ENCODE measurements at regions of chr20 and their contacts with region 1.

Region 1: DNA sequence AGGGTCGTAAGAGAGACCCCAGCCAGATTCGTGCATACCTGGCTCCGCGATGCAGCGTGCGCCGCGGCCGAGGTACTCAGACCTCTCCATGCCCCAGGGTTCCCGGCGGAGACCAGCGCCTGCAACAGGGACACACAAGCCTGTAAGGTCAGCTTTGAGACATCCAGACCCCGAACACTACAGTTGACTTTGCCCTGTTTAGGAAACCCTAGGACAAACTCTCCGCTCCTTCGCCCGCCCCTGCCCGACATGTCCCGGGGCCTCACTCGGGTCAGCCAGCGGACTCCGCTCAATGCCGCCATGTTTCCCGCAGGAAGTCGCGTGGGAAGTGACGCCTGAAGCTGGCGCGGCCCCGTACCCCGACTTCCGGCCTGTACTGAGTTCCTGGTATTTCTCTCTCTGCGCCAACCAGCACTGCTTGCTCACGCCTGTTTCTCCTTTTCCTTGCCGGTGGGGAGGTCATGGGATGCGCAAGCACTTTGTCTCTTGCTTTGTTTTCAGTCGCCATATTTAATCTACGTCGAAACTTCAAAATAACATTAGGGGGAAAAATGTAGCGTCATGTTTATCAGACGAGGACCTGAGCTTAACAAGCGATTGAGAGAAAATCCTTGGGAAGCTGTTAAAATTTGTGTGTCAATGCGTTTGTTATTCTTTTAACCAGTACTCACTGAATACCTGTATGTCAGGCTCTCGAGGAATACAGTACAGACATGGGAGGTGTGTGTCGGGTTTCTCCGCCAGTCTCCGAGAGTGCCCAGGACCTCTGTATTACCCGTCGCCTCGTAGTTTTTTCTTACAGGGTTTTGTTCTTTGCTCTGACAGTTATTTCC is at the start of gene IDH3B:
- DNase-seq: peak; percentile 94
- H3K4me3 ChIP-seq: peak within 1 kb of the TSS; percentile 84
- H3K27ac ChIP-seq: peak within 1 kb of the TSS; percentile 76
- H3K4me1 ChIP-seq: peaks cover 3% of the 10 kb centered on the region
- H3K27me3 ChIP-seq: no peaks in the 10 kb centered on the region
- CTCF ChIP-seq: no peak
- total RNA-seq, gene IDH3B: 135 and 146 TPM in 2 replicates

Region 2: GRCh38 chr20:2305946-2306345 is 358.2 kb before region 1 on chr20:
- CTCF ChIA-PET with region 1: no interaction called
- POLR2A ChIA-PET with region 1: interaction called, 16 read pairs
- intact Hi-C with region 1: no loop called
- DNase-seq: no peak
- H3K4me3 ChIP-seq: no peak overlapping the region
- H3K27ac ChIP-seq: no peak overlapping the region
- H3K4me1 ChIP-seq: no peaks in the 10 kb centered on the region
- H3K27me3 ChIP-seq: no peaks in the 10 kb centered on the region
- CTCF ChIP-seq: no peak

Measured in A673 (cell line).